Activated T-helper 2 cell treated with anti-CD3 and anti-CD28 coated beads, Interferon-gamma antibody, Interleukin-2, Interleukin-4, amounts not matched to agents 10 μg/mL and 5 μg/mL and 100 μg/mL, durations not matched to agents 14 hours and 24 hours and 36 hours (primary cell): ENCODE measurements at regions of chrX and their contacts with region 1.

Region 1: GRCh38 chrX:46310815-46311497 is 234.3 kb downstream of the ZNF674 start:
- DNase-seq: no peak
- H3K4me3 Mint-ChIP-seq: no peak overlapping the region
- H3K27ac Mint-ChIP-seq: no peak overlapping the region
- H3K4me1 Mint-ChIP-seq: peaks cover 9% of the 10 kb centered on the region
- H3K27me3 Mint-ChIP-seq: no peaks in the 10 kb centered on the region

Region 2: GRCh38 chrX:46218373-46218772 is 92.6 kb before region 1 on chrX:
- intact Hi-C with region 1: no loop called
- DNase-seq: no peak
- H3K4me3 Mint-ChIP-seq: no peak overlapping the region
- H3K27ac Mint-ChIP-seq: no peak overlapping the region
- H3K4me1 Mint-ChIP-seq: no peaks in the 10 kb centered on the region
- H3K27me3 Mint-ChIP-seq: peaks cover 2% of the 10 kb centered on the region

Region 3: DNA sequence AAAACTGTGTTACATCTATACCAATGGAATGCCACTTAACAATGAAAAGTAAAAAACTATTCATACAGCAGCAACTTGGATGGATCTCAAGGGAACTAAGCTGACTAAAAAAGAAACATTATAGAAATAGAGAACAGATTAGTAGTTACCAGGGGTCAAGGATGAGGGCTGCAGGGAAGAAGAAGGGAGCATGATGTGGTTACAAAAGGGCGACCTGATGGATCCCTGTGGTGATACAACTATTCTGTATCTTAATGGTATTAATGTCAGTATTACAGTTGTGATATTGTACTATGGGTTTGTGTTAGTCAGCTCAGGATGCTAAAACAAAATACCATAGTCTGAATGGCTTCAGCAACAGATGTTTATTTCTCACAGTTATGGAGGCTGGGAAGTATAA is 43.5 kb after region 1 on chrX:
- intact Hi-C with region 1: no loop called
- DNase-seq: no peak
- H3K4me3 Mint-ChIP-seq: no peak overlapping the region
- H3K27ac Mint-ChIP-seq: no peak overlapping the region
- H3K4me1 Mint-ChIP-seq: no peaks in the 10 kb centered on the region
- H3K27me3 Mint-ChIP-seq: no peaks in the 10 kb centered on the region

Region 4: GRCh38 chrX:46376246-46376885 is 65.4 kb after region 1 on chrX:
- intact Hi-C with region 1: loop called (anchors 5 kb)
- DNase-seq: no peak
- H3K4me3 Mint-ChIP-seq: no peak overlapping the region
- H3K27ac Mint-ChIP-seq: no peak overlapping the region
- H3K4me1 Mint-ChIP-seq: peaks cover 10% of the 10 kb centered on the region
- H3K27me3 Mint-ChIP-seq: peaks cover 5% of the 10 kb centered on the region

Region 5: DNA sequence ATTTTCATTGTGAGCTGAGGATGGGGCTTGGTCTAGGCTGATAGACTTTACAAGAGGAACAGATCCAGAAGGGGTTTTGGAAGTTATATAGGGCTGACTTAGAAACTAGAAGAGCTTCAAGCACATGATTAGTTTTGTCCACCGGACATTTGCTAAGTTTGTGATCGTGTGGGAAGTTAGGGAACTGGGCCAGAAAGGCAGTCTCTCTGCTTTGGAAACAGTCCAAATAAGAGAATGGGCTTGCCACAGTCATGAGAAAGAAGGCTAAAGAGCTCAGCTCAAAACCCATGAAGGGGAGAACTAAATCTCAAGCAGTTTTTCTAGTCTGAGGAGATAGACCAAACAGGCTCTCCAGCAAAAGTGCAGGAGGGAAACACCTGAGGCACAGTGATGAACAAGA is 166.5 kb after region 1 on chrX:
- intact Hi-C with region 1: no loop called
- DNase-seq: no peak
- H3K4me3 Mint-ChIP-seq: no peak overlapping the region
- H3K27ac Mint-ChIP-seq: no peak overlapping the region
- H3K4me1 Mint-ChIP-seq: no peaks in the 10 kb centered on the region
- H3K27me3 Mint-ChIP-seq: no peaks in the 10 kb centered on the region